Heart left ventricle (tissue), 16 donors: ENCODE measurements at regions of chr6 and their contacts with region 1.

Region 1: DNA sequence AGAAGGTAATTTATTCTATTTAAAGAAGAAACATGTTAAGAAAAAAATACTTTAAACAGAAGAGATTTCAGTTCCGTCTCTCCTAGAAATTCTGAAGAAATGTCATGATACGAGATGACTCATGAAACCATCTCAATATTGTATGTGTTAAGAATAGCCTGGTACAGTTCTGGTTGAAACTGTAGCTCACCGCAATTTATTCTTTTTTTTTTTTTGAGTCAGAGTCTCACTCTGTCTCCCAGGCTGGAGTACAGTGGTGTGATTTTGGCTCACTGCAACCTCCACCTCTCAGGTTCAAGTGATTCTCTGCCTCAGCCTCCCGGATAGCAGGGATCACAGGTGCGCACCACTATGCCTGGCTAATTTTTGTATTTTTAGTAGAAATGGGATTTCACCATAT is 103.3 kb downstream of the ARHGAP18 start:
- DNase-seq: no peak
- ATAC-seq: no peak
- H3K4me3 ChIP-seq: no peak overlapping the region
- H3K27ac ChIP-seq: peak overlapping the region in 1 of 12 donors; percentile 9
- H3K4me1 ChIP-seq: peaks cover 0 to 14% (median 0%) of the 10 kb centered on the region in 12 donors
- H3K27me3 ChIP-seq: no peaks in the 10 kb centered on the region
- CTCF ChIP-seq: no peak
- POLR2A ChIP-seq: no peak

Region 2: GRCh38 chr6:129936329-129937165 is 329.9 kb after region 1 on chr6:
- intact Hi-C with region 1: loop called in 1 of 10 experiments (anchors 10 kb)
- DNase-seq: peak in 3 of 5 donors; percentile 25 to 47 (median 33)
- ATAC-seq: peak in 1 of 4 donors; percentile 22
- H3K4me3 ChIP-seq: no peak overlapping the region
- H3K27ac ChIP-seq: no peak overlapping the region
- H3K4me1 ChIP-seq: peaks cover 0 to 4% (median 0%) of the 10 kb centered on the region in 12 donors
- H3K27me3 ChIP-seq: peaks cover 0 to 13% (median 0%) of the 10 kb centered on the region in 9 donors
- CTCF ChIP-seq: peak in 11 of 12 donors; percentile 20 to 69 (median 54)
- POLR2A ChIP-seq: no peak